ENCODE measurements at regions of chr6 and their contacts with region 1.

Region 1: DNA sequence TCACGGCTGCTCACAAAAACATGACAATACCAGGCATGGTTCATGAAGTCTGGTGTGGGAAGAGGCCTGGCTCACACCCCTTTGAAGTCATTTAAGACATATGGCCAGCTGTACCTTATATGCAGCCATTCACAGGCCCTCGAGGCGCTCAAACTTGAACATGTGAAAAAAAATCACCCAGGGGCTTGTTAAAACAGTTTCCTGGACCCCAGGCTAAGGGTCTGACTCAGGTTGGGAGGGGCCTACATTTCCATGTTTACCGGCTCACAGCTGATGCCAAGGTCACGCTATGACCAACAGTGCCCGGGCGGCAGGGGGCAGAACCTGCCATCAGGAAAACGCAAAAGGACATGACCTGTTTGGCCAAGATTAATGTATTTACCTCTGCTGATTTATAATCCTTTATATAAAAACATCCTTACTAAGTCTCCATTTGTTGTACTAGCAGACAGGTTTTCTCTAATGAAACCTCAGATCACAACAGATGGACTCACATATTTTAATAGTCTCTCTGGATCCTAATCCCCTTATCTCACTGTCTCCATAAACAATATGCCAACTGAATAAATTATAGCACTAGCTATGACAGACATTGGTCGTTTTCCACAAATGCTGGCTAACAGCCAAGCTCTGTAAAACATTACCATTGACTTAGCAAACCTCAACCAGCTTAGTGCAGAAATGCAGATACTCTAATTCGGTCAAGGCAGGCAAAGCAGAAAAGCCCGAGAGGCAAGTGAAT is 19.9 kb downstream of the EZR start:
- DNase-seq: no peak
- H3K4me3 Mint-ChIP-seq: no peak overlapping the region
- H3K27ac Mint-ChIP-seq: peak overlapping the region; percentile 25
- H3K4me1 Mint-ChIP-seq: peaks cover 83% of the 10 kb centered on the region
- H3K27me3 Mint-ChIP-seq: no peaks in the 10 kb centered on the region

Region 2: DNA sequence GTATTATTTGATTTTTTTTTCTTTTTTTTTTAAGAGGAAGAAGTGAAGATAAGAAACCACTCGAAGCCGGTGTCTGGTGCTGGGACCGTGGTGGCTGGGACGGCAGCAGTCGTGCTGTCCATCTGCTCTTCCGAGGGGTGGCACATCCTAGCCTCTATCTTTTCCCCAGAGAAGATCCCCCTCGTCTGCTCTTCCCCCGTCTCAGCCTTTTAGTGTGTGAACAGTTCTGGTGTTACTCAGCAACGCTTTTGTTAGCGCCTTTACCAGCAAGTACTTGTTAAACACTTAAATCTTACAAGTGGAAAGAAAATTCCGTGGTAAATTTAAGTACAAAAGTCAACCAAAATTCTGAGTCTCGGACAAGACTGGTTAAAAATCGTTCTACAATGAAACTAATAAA is 110.7 kb after region 1 on chr6:
- CTCF ChIA-PET with region 1: no interaction called
- POLR2A ChIA-PET with region 1: interaction called, 11 read pairs
- DNase-seq: no peak
- H3K4me3 Mint-ChIP-seq: no peak overlapping the region
- H3K27ac Mint-ChIP-seq: no peak overlapping the region
- H3K4me1 Mint-ChIP-seq: peaks cover 29% of the 10 kb centered on the region
- H3K27me3 Mint-ChIP-seq: peaks cover 2% of the 10 kb centered on the region

Measured in activated CD4-positive, alpha-beta T cell treated with anti-CD3 and anti-CD28 coated beads, Interleukin-2, amount 10 ng/mL, durations not matched to agents 7 days and 5 days (primary cell).